ENCODE measurements at regions of chr11 and their contacts with region 1.

Region 1: GRCh38 chr11:125345421-125346178 is 150.5 kb downstream of the FEZ1 start:
- DNase-seq: peak; percentile 85
- ATAC-seq: peak; percentile 82 to 83

Region 2: DNA sequence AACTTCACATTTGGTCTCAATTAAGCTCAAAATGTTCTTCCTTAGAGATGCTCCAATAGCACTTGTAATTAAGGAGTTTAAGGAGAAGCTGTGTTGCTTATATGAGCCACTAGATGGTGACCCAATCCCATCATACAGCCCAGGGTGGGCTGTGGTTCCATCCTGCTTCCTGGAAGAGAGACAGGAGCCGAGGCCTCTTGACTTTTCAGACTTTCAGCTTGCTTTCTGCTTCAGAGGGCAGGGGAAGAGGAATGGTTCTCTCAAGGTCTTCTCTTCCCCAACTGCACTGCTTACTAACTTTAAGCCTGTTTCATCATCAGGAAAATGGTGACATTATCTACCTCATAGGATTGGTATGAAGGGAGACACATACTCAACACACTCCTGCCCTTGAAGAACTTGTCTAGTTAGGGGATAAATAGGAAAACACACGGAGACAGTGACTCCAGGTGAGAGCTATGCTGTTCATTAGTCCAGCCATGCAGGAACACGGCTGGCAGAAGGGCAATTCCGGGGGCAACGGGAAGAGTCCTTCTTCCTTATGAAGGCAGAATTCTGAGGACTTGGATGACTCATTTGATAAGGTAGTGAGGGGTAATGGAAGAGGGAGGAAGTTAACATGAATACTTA is 254.2 kb before region 1 on chr11:
- intact Hi-C with region 1: loop called in 1 of 2 experiments (anchors 10 kb)
- DNase-seq: no peak
- ATAC-seq: peak; percentile 90 to 91

Region 3: GRCh38 chr11:125164422-125165110 is 181.0 kb before region 1 on chr11 and contains the start of gene PKNOX2:
- intact Hi-C with region 1: loop called (anchors 2 kb)
- DNase-seq: peak; percentile 86
- ATAC-seq: peak; percentile 78
- total RNA-seq, gene PKNOX2: 13.8 to 14.4 TPM

Region 4: DNA sequence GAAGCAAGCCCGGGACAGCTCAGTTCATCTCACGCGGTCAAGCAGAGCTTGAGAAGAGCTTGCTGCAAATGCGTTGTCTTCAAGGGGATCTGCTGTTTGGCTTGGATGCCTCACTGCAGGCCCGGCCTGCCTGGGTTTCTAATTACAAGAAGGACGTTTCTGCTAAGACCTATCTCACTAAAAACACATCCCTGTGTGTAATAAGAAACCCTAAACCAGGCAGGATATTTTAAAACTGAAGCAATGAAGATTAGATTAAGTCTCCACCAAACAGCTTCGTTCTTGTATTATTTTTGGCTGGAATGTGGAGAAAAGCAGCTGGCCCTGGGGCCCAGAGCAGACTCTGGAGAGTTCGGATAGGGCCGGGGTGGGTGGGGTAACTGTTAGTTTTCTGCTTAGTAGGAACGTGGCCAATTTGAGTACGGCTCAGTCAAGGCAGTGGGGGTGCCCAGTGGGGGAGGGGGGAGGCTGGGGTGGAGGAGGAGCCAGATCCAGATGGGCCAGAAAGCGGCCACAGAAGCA is 175.0 kb before region 1 on chr11:
- intact Hi-C with region 1: loop called (anchors 2 kb)
- DNase-seq: peak; percentile 76
- ATAC-seq: peak; percentile 63 to 68

Region 5: GRCh38 chr11:125239585-125240560 is 105.7 kb before region 1 on chr11:
- intact Hi-C with region 1: loop called in 1 of 2 experiments (anchors 10 kb)
- DNase-seq: no peak
- ATAC-seq: no peak

Region 6: GRCh38 chr11:125287491-125288210 is 57.9 kb before region 1 on chr11:
- intact Hi-C with region 1: loop called in 1 of 2 experiments (anchors 10 kb)
- DNase-seq: peak; percentile 53
- ATAC-seq: peak; percentile 77 to 81

Measured in left cardiac atrium (tissue), 4 donors.